ENCODE measurements at regions of chr15 and their contacts with region 1.

Region 1: GRCh38 chr15:89750560-89751542 is at the start of gene MESP1:
- DNase-seq: peak; percentile 81 to 92
- H3K4me3 ChIP-seq: peak within 1 kb of the TSS; percentile 78
- H3K27ac ChIP-seq: peak within 1 kb of the TSS; percentile 99
- H3K4me1 ChIP-seq: peaks cover 59% of the 10 kb centered on the region
- H3K27me3 ChIP-seq: no peaks in the 10 kb centered on the region
- CTCF ChIP-seq: peak; percentile 72
- total RNA-seq, gene MESP1: 8.5 and 17.8 TPM in 2 replicates

Region 2: DNA sequence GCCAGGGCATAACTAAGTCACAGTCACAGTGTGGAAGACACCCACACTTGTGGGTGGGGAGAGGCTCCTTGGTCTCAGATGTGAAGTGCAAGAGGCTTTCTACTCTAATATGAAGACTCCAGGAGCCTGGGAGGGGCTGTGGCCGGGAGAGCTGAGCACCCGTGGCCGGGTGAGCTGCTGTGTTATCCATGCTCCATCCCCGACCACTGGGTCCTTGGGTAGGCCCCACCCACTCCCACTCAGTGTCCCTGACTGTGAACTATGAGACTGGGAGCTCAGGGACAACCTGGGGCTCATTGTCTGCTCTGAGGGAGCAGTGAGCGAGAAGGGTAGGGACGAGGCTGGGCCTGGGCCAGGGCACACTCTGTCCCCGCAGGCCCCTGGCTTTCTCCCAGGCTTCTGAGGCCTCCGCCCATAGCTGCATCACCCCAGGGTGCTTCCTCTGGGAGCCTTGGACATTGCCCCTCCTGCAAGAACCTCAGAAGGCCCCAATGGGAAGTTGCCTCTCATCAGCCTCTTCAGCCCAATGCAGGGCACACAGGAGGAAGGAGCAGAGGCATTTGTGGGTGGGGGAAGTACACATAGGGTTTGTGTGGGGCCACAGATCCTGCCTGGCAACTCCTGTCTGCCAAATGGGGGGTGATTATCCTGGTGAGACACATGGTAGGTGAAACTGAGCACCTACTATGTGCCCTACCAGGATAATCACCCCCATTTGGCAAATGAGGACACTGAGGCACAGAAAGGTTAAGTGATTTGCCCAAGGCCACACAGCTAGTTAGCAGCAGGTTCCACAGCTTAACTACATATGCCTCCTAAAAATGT is 61.4 kb after region 1 on chr15:
- CTCF ChIA-PET with region 1: interaction called, 4 read pairs
- POLR2A ChIA-PET with region 1: no interaction called
- intact Hi-C with region 1: loop called (anchors 5 kb)
- DNase-seq: peak; percentile 61 to 74
- H3K4me3 ChIP-seq: peak overlapping the region; percentile 76; the same call in 1 of the 2 replicates
- H3K27ac ChIP-seq: peak overlapping the region; percentile 51
- H3K4me1 ChIP-seq: peaks cover 52% of the 10 kb centered on the region
- H3K27me3 ChIP-seq: no peaks in the 10 kb centered on the region
- CTCF ChIP-seq: no peak

Region 3: GRCh38 chr15:89874926-89875564 is 124.2 kb after region 1 on chr15:
- CTCF ChIA-PET with region 1: interaction called, 16 read pairs
- POLR2A ChIA-PET with region 1: no interaction called
- intact Hi-C with region 1: no loop called
- DNase-seq: peak; percentile 55 to 77
- H3K4me3 ChIP-seq: no peak overlapping the region
- H3K27ac ChIP-seq: peak overlapping the region; percentile 22; the same call in 1 of the 2 replicates
- H3K4me1 ChIP-seq: no peaks in the 10 kb centered on the region
- H3K27me3 ChIP-seq: no peaks in the 10 kb centered on the region
- CTCF ChIP-seq: peak; percentile 95

Region 4: GRCh38 chr15:90086868-90087268 is 336.0 kb after region 1 on chr15:
- CTCF ChIA-PET with region 1: interaction called, 14 read pairs
- POLR2A ChIA-PET with region 1: no interaction called
- intact Hi-C with region 1: no loop called
- DNase-seq: peak in 1 of 2 experiments; percentile 47
- H3K4me3 ChIP-seq: no peak overlapping the region
- H3K27ac ChIP-seq: no peak overlapping the region
- H3K4me1 ChIP-seq: no peaks in the 10 kb centered on the region
- H3K27me3 ChIP-seq: no peaks in the 10 kb centered on the region
- CTCF ChIP-seq: peak; percentile 84

Region 5: DNA sequence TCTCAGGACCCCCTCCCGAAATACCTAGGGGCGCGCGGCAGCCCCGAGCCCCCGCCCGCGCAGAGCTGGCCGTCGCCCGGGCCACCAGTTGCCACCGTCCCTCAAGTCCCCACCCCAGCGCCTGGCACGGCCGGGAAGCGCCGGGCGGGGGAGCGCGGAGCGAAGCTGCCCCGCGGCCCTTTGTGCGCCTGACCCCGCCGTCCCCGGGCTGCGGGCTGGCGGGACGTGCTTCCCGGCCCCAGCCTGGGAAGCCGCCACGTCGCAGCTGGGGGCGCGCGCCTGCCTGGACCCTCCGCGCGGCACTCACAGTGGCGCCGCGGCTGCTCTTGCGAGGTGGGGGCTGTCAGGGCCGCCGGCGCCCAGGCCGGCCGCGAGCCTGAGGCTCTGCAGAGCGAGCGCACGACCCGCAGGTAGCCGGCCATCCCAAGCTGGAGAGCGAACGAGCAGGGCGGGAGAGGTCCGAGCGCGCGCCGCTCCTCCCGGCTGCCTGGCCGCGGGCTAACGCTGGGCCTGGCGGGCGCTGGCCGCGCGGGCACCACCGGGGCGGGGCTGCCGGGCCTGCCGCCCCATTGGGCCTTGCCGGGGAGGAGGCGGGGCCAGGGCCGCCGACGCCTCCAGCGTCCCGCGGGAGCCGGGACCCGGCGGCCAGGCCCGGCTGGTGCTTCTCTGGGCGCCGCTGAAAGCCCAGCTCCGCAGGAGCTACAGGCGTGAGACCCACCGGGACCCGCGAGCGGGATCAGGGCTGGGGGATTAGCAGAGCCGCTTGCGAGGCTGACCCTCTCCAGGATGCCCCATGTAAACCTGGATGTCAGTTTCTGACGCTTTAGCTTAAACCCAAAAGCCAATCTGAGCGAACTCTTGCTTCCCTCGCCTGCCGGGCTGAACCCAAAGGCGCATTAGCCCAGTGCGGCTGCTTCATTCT is 351.4 kb after region 1 on chr15 and contains the start of gene IDH2:
- CTCF ChIA-PET with region 1: no interaction called
- POLR2A ChIA-PET with region 1: no interaction called
- intact Hi-C with region 1: loop called (anchors 2 kb)
- DNase-seq: peak; percentile 59 to 84
- H3K4me3 ChIP-seq: peak within 1 kb of the TSS; percentile 80
- H3K27ac ChIP-seq: no peak within 1 kb of the TSS
- H3K4me1 ChIP-seq: peaks cover 89% of the 10 kb centered on the region
- H3K27me3 ChIP-seq: no peaks in the 10 kb centered on the region
- CTCF ChIP-seq: no peak
- total RNA-seq, gene IDH2: 87.9 and 96.7 TPM in 2 replicates